Activated B cell treated with CpG ODN at 0.5 μM for 24 hours (primary cell): ENCODE measurements at regions of chr11 and their contacts with region 1.

Region 1: DNA sequence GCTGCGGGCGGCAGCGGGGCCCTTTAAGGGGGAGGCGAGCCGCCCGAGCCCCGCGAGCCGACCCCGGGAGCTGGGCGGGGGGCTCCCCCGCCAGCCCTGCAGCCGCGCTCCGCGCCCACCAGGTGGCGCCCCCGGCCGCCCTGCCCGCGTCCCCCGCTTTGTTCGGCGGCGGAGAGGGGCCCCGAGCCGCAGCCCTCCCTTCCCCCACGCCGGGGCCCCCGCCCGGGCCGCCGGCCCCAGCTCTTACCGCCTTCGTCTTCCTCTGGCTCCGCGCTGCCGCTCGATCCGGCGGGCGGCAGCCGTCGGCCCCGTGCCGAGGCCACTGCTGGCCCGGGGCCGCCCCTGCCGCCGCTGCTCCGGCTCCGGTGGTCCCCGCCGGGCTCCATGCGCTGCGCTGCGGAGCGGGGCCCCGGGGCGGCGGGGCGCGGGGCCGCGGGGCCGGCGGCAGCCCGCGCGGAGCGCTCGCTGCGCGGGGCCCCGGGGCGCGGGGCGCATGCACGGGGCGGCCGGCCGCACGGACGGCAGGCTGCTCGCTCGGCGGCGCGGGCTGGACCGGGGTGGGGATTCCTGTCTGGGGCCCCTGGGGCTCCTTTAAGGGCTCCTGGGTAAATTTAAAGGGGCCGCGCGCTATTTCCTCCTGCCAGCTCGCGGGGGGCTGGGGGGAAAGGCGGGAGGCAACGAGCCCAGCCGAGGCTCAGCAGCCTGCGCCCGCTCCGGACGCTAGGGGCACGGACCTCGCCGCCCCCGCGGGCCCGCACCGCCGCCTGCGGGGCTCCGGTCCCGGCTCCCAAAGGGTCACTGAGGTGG is at the start of gene ZFTA:
- DNase-seq: peak; percentile 80
- ATAC-seq: peak; percentile 68
- H3K4me3 Mint-ChIP-seq: peak within 1 kb of the TSS; percentile 94
- H3K27ac Mint-ChIP-seq: peak within 1 kb of the TSS; percentile 83
- H3K4me1 Mint-ChIP-seq: peaks cover 11% of the 10 kb centered on the region
- H3K27me3 Mint-ChIP-seq: peaks cover 4% of the 10 kb centered on the region
- CTCF ChIP-seq: no peak
- total RNA-seq, gene ZFTA: 11.2 and 12.5 TPM in 2 replicates

Region 2: DNA sequence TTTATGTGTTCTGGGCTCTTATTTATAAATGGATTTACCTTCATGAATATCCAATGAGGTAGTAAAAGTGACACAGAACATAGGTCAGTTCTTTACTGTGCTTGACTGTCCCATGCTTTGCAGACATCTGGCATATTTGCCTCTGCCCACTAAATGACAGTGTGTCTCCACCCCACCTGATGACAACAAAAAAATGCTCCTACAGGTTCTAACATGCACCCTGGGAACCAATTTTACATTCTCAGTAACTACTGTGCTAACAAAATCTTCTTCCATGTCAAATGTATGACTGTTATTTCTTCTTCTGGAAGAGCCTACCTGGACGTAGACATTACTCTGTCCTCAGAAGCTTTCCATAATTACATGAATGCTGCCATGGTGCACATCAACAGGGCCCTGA is 16.2 kb before region 1 on chr11:
- CTCF ChIA-PET with region 1: no interaction called
- POLR2A ChIA-PET with region 1: no interaction called
- intact Hi-C with region 1: no loop called
- DNase-seq: no peak
- ATAC-seq: no peak
- H3K4me3 Mint-ChIP-seq: no peak overlapping the region
- H3K27ac Mint-ChIP-seq: no peak overlapping the region
- H3K4me1 Mint-ChIP-seq: no peaks in the 10 kb centered on the region
- H3K27me3 Mint-ChIP-seq: no peaks in the 10 kb centered on the region
- CTCF ChIP-seq: no peak

Region 3: DNA sequence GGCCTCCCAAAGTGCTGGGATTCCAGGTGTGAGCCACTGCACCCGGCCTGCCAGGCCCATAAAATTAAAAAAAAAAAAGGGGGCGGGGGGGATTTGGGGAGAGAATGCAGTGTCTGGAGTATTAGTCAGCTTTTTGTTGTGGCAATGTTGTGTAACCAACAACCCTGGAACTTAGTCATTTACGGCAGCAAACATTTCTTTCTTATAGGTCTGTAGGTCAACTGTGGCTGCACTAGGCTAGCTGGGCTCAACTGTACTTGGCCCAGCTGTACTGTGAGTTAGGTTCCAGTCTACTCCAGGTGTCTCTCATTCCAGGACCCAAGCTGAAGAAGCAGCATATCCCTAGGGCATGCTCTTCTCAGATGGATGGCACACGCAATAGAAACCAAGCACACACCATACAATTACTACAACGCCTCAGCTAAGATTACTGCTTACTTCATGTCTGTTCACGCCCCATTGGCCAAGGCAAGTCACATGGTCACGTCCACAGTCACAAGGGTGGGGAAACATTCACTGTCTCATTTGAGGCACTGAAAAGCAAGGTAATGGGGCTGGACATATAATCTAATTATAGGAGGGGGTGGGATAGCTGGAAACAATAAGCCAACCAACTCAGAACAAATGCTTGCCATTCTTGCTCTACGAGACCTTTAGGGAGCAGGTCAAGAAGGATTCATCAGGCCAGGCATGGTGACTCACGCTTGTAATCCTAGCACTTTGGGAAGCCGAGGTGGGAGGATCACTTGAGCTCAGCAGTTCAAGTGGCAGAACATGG is 34.4 kb after region 1 on chr11:
- CTCF ChIA-PET with region 1: no interaction called
- POLR2A ChIA-PET with region 1: no interaction called
- intact Hi-C with region 1: no loop called
- DNase-seq: no peak
- ATAC-seq: no peak
- H3K4me3 Mint-ChIP-seq: no peak overlapping the region
- H3K27ac Mint-ChIP-seq: no peak overlapping the region
- H3K4me1 Mint-ChIP-seq: no peaks in the 10 kb centered on the region
- H3K27me3 Mint-ChIP-seq: no peaks in the 10 kb centered on the region
- CTCF ChIP-seq: no peak

Region 4: DNA sequence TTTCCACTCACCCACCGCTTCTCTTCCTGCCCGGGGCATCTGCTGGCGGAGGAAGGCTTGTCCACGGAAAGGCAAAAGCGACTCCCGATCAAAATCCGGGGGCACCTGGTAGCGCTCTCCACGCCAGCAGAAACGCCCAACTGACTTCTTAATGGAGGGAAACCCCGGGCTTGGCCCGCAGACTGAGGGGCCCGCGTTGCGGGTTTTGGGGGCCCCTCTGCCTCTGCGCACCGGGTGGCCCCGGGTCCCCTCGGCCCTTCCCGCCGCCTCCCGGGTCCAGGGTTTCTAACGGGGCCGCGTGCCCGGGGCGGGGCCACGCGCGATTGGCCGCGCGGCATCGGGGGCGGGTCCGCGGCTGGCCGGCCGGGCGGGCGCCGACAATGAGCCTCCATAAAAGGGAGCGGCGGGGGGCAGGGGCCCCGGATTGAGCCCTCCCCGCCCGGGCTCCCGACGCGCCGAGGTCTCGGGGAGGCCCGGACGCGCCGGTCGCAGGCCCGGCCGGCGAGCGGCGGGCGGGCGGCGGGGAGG is 44.7 kb after region 1 on chr11 and contains the start of gene SPINDOC:
- CTCF ChIA-PET with region 1: no interaction called
- POLR2A ChIA-PET with region 1: interaction called, 3 read pairs
- intact Hi-C with region 1: loop called (anchors 1 kb)
- DNase-seq: peak; percentile 77
- ATAC-seq: peak; percentile 94
- H3K4me3 Mint-ChIP-seq: peak within 1 kb of the TSS; percentile 85
- H3K27ac Mint-ChIP-seq: no peak within 1 kb of the TSS
- H3K4me1 Mint-ChIP-seq: peaks cover 21% of the 10 kb centered on the region
- H3K27me3 Mint-ChIP-seq: no peaks in the 10 kb centered on the region
- CTCF ChIP-seq: no peak
- total RNA-seq, gene SPINDOC: 18.7 and 20.8 TPM in 2 replicates

Region 5: GRCh38 chr11:63916837-63917691 is 148.6 kb after region 1 on chr11 and contains the start of gene RCOR2:
- CTCF ChIA-PET with region 1: interaction called, 3 read pairs
- POLR2A ChIA-PET with region 1: interaction called, 9 read pairs
- intact Hi-C with region 1: loop called (anchors 1 kb)
- DNase-seq: peak; percentile 58
- ATAC-seq: peak; percentile 74
- H3K4me3 Mint-ChIP-seq: peak within 1 kb of the TSS; percentile 80
- H3K27ac Mint-ChIP-seq: no peak within 1 kb of the TSS
- H3K4me1 Mint-ChIP-seq: peaks cover 19% of the 10 kb centered on the region
- H3K27me3 Mint-ChIP-seq: peaks cover 2% of the 10 kb centered on the region
- CTCF ChIP-seq: no peak
- total RNA-seq, gene RCOR2: not detected in 2 replicates

Region 6: GRCh38 chr11:63945477-63946163 is 177.2 kb after region 1 on chr11:
- CTCF ChIA-PET with region 1: interaction called, 11 read pairs
- POLR2A ChIA-PET with region 1: no interaction called
- intact Hi-C with region 1: loop called (anchors 1 kb)
- DNase-seq: no peak
- ATAC-seq: peak; percentile 79
- H3K4me3 Mint-ChIP-seq: no peak overlapping the region
- H3K27ac Mint-ChIP-seq: no peak overlapping the region
- H3K4me1 Mint-ChIP-seq: peaks cover 23% of the 10 kb centered on the region
- H3K27me3 Mint-ChIP-seq: no peaks in the 10 kb centered on the region
- CTCF ChIP-seq: no peak

Region 7: DNA sequence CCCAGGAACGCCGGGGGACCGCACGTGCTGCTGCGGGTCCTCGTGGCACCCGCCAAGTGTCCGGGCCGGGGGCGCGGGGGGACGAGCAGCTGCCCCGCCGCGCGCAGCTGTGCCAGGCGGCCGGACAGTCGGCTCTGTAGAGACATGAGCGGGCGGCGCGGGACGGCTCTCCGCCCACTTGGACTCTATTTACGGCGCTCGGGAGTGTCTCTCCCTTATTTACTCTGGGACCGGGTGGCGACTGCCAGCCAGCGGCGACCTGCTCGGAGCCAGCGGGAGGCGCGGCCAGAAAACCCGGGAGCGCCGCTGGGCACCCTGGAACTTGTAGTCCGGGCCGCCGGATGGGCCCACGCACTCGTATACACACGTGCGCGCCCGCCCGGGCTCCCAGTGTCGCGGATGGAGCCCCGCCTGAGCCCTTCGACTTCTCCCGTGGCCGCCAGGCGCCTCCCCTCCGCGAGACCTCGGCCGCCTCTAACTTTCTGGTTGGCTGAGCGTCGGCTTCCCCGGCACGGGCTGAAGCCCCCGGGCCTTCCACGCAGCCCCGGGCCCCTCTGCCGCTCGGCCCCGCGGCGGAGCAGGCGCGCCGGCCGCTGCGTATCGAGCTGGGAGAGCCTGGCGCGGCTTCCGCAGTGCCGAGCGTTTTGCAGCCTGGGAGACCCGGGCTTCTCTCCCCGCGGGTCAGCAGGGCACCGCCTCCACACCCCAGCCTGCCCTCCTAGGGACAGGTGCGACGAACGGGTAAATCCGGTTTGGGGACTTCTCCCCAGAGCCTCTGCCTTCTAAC is 397.6 kb after region 1 on chr11 and contains the start of gene MACROD1:
- CTCF ChIA-PET with region 1: no interaction called
- POLR2A ChIA-PET with region 1: no interaction called
- intact Hi-C with region 1: loop called (anchors 5 kb)
- DNase-seq: peak; percentile 67
- ATAC-seq: peak; percentile 89
- H3K4me3 Mint-ChIP-seq: peak within 1 kb of the TSS; percentile 87
- H3K27ac Mint-ChIP-seq: peak within 1 kb of the TSS; percentile 61
- H3K4me1 Mint-ChIP-seq: peaks cover 11% of the 10 kb centered on the region
- H3K27me3 Mint-ChIP-seq: no peaks in the 10 kb centered on the region
- CTCF ChIP-seq: no peak
- total RNA-seq, gene MACROD1: 4.5 and 5.5 TPM in 2 replicates